ENCODE measurements at regions of chr4 and their contacts with region 1.

Region 1: DNA sequence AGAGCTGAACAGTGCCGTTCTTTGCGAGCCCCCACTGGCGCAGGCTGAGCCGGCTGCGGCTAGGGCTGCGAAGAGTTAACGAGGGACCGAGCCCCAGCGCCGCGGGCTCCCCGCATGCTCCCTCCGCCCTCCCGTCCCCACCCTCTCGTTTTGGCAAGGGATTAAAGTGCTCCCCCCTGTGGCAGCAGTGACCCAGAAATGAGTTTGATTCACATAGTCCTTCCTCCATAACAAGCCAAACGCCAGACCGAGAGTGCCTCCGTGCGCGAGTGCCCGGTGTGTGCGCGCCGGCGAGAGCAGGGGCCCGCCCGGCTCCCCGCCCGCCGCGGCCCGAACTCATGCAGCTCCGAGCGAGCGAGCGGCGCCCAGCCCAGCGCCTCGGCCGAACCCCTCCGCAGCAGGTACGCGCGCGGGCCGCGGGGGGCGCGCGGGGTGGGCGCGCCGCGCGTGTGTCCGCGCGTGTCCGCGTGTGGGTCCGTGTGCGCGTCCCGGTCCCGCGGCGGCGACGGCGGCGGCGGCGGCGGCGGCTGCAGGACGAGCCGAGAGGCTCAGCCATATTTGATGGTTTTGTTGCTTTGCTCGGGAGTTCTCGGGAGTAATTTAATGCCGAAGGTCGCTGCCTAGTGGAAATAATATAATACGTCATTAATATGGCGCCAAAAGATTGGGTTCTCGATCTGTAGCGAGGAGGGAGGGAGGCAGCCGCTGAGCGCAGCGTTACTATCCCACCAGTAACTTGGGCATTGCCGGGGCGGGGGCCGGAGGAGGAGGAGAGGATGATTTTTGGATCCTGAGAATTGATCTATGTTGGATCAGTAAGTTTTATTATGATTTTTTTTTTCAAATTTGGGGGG is at the start of gene JADE1:
- DNase-seq: peak; percentile 86 to 97 (median 88)
- ATAC-seq: peak; percentile 73
- H3K4me3 ChIP-seq: peak within 1 kb of the TSS; percentile 93
- H3K27ac ChIP-seq: peak within 1 kb of the TSS; percentile 99
- H3K4me1 ChIP-seq: peaks cover 6 to 19% of the 10 kb centered on the region in 2 experiments; a peak in 4 of 5 replicates
- H3K27me3 ChIP-seq: no peaks in the 10 kb centered on the region
- CTCF ChIP-seq: peak; percentile 75 to 97 (median 97)
- EP300 ChIP-seq: peak; percentile 45; the same call in 1 of the 2 replicates
- POLR2A ChIP-seq: peak; percentile 52
- RAD21 ChIP-seq: peak; percentile 81 to 92
- polyA plus RNA-seq, gene JADE1: 8.3 to 10.8 TPM

Region 2: DNA sequence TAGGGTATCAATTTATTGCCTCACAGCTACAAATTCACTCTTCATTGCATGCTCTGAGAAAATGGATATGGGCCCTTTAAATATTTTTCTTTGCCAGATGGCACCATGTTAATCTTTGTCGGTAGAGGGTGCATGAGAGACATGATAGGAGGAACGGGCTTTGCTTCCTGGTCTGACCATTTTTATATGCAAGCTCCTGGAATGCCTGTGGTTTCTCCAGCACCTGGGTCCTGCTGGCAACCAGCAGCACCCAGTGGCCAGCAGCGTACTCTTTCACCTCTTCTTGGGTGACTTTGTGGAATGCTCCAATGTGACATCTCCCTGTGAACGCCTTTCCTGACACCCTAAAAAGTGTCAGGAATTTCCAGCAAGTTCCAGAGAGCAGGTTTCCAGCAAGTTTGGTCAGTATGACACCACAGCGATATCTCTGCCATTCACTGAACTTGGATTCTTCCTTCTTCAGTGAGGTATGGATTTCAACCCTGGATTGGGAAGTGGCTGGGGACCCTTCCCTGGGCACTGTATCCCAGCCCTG is 381.8 kb before region 1 on chr4:
- CTCF ChIA-PET with region 1: interaction called, 6 read pairs
- POLR2A ChIA-PET with region 1: no interaction called
- in situ Hi-C with region 1: no loop called
- intact Hi-C with region 1: loop called (anchors 10 kb)
- DNase-seq: peak; percentile 33 to 72 (median 54)
- ATAC-seq: peak; percentile 98
- H3K4me3 ChIP-seq: no peak overlapping the region
- H3K27ac ChIP-seq: no peak overlapping the region
- H3K4me1 ChIP-seq: no peaks in the 10 kb centered on the region; a peak in 1 of 5 replicates
- H3K27me3 ChIP-seq: no peaks in the 10 kb centered on the region
- CTCF ChIP-seq: peak; percentile 67 to 85 (median 74)
- EP300 ChIP-seq: no peak
- POLR2A ChIP-seq: no peak
- RAD21 ChIP-seq: peak; percentile 67 to 82

Region 3: DNA sequence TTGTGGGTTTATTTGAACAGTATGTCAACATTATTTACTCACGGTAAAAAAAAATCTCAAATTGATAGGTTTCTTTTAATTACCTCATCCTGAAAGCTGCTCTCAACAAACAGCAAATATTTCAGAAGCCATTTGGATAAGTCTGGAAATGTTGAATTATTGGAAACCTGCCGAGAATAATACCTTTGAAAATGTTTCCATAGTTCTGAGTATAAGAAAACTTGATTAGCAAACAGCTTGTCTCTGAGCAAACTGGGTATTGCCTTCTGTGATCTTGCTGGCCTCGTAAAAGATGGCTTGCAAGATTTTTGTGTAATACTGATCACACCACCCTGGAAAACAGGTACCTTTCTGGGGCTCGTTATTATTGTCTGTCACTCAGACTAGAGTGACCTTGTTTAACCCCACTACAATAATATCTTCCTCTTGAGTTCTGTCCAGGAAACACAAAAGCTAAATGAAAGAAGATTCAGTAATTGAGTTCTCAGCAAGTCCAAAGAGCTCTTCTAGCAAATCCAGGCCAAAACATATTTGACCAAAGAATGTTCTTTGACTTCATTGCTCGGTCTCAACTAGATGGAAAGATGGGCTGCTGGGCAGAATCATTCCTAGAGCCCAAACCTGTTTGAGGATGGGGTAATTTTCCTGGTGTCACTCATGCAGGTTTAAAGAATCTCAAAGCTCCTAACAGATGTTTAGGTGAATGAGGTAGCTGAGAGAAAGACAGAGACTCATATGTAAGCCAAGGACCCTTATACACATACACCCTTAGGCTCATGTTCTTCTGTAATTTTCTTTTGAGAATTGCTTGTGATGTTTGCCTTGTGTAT is 255.8 kb before region 1 on chr4:
- CTCF ChIA-PET with region 1: no interaction called
- POLR2A ChIA-PET with region 1: interaction called, 10 read pairs
- in situ Hi-C with region 1: no loop called
- intact Hi-C with region 1: no loop called
- DNase-seq: no peak
- ATAC-seq: peak; percentile 18; the same call in 2 of the 3 replicates
- H3K4me3 ChIP-seq: peak overlapping the region; percentile 39; the same call in 1 of the 2 replicates
- H3K27ac ChIP-seq: peak overlapping the region; percentile 85; the same call in 2 of the 3 replicates
- H3K4me1 ChIP-seq: peaks cover 6 to 12% of the 10 kb centered on the region in 2 experiments; a peak in 3 of 5 replicates
- H3K27me3 ChIP-seq: no peaks in the 10 kb centered on the region
- CTCF ChIP-seq: no peak
- EP300 ChIP-seq: no peak
- POLR2A ChIP-seq: no peak
- RAD21 ChIP-seq: no peak

Region 4: DNA sequence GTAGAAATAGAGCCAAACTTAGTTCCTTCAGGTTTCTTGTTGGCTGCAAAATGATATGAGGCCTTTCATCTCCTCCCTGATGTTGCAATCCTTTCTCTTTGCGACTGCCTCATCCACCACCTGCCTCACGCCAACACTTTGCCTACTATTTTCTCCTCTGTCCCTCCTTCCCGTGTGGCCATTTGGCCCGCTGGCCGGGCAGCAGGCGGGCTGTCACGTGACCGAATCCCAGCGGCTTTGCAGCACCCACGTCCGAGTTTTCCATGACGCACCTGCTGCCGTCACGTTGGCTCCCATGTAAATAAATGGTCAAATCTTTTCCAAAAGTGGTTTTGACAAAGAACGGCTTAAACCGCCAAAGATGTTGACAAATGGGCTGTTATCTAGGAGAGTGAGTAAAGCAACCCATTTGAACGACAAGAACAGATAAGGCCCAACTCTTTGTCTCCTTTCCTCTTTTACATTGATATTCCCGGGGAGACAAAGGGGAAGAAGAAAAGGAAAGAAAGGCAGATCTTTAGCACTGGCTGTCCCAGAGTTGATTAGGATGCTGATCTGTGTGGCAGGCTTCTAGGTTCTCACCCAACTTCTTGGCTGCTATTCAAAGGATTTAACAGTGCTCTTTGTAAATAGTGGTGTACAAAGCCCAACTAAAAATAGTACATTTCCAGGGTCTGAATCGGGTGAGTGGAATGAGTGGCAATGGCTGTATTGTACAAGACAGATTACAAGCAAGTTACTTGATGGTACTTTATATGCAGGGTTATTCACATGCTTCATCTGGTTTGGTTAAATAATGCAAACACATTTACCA is 174.4 kb before region 1 on chr4:
- CTCF ChIA-PET with region 1: no interaction called
- POLR2A ChIA-PET with region 1: no interaction called
- in situ Hi-C with region 1: no loop called
- intact Hi-C with region 1: no loop called
- DNase-seq: peak; percentile 39 to 73 (median 42)
- ATAC-seq: peak; percentile 76
- H3K4me3 ChIP-seq: peak overlapping the region; percentile 8; the same call in 1 of the 2 replicates
- H3K27ac ChIP-seq: no peak overlapping the region; the same call in 2 of the 3 replicates
- H3K4me1 ChIP-seq: peaks cover 4 to 13% of the 10 kb centered on the region in 2 experiments; a peak in 4 of 5 replicates
- H3K27me3 ChIP-seq: no peaks in the 10 kb centered on the region
- CTCF ChIP-seq: no peak
- EP300 ChIP-seq: peak; percentile 71
- POLR2A ChIP-seq: no peak
- RAD21 ChIP-seq: peak in 1 of 2 experiments; percentile 15; a peak in 1 of 4 replicates

Region 5: GRCh38 chr4:128649575-128650205 is 160.0 kb before region 1 on chr4:
- CTCF ChIA-PET with region 1: no interaction called
- POLR2A ChIA-PET with region 1: no interaction called
- in situ Hi-C with region 1: no loop called
- intact Hi-C with region 1: loop called (anchors 1 kb)
- DNase-seq: no peak
- ATAC-seq: no peak
- H3K4me3 ChIP-seq: no peak overlapping the region
- H3K27ac ChIP-seq: no peak overlapping the region
- H3K4me1 ChIP-seq: peaks cover 3 to 5% of the 10 kb centered on the region in 2 experiments; a peak in 2 of 5 replicates
- H3K27me3 ChIP-seq: no peaks in the 10 kb centered on the region
- CTCF ChIP-seq: no peak
- EP300 ChIP-seq: no peak
- POLR2A ChIP-seq: no peak
- RAD21 ChIP-seq: no peak

Region 6: DNA sequence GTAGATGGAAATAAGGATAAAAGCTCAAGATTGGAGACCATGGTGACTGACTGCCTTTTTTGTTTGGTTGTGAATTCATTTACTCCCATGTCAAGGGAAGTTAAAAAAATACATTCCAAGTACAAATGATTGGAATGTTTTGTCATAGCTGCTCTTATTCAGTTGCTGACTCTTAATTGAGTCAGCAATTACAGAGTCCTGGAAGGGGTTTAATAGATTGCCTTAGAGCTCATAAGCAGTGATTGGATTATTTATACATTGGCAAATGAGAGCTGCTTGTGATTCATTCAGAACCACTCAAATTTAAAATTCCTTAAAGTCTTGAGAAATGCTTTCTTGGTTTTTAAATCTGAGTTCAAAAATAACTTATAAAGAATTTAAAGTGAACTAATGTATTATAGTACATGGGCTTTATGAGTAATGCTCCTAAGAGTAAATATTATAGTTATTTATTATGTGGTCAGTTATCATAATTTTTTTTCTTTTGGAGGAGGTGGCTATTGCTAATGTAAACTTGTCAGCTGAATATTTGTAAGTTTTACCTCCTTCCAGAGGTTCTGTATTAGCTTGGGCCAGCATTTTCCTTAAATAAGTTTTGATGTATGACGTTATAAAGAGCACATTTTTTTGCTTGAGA is 13.4 kb after region 1 on chr4:
- CTCF ChIA-PET with region 1: no interaction called
- POLR2A ChIA-PET with region 1: interaction called, 21 read pairs
- in situ Hi-C with region 1: no loop called
- intact Hi-C with region 1: no loop called
- DNase-seq: no peak
- ATAC-seq: no peak
- H3K4me3 ChIP-seq: no peak overlapping the region
- H3K27ac ChIP-seq: no peak overlapping the region
- H3K4me1 ChIP-seq: peaks cover 14 to 41% of the 10 kb centered on the region in 2 experiments; a peak in 4 of 5 replicates
- H3K27me3 ChIP-seq: no peaks in the 10 kb centered on the region
- CTCF ChIP-seq: no peak
- EP300 ChIP-seq: no peak
- POLR2A ChIP-seq: no peak
- RAD21 ChIP-seq: no peak

Region 7: GRCh38 chr4:128863312-128864075 is 53.8 kb after region 1 on chr4:
- CTCF ChIA-PET with region 1: no interaction called
- POLR2A ChIA-PET with region 1: no interaction called
- in situ Hi-C with region 1: no loop called
- intact Hi-C with region 1: loop called (anchors 5 kb)
- DNase-seq: peak; percentile 53 to 72 (median 66)
- ATAC-seq: peak; percentile 87
- H3K4me3 ChIP-seq: no peak overlapping the region
- H3K27ac ChIP-seq: no peak overlapping the region
- H3K4me1 ChIP-seq: no peaks in the 10 kb centered on the region
- H3K27me3 ChIP-seq: no peaks in the 10 kb centered on the region
- CTCF ChIP-seq: peak; percentile 58 to 83 (median 70)
- EP300 ChIP-seq: no peak
- POLR2A ChIP-seq: no peak
- RAD21 ChIP-seq: peak; percentile 63 to 66